HAP-1 (cell line): ENCODE measurements at regions of chr11 and their contacts with region 1.

Region 1: DNA sequence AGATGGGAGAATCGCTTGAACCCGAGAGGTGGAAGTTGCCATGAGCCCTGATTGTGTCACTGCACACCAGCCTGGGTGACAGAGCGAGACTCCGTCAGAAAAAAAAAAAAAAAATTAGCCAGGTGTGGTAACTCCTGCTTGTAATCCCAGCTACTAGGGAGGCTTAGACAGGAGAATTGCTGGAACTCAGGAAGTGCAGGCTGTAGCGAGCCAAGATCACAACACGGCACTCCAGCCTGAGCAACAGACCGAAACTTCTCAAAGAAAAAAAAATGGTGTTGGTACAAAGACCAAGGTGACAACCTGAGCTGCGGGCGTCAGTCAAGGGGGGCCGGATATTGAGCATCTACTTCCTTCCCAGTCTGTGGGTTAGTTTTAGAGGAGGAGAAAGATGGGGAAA is 48.4 kb upstream of the HSPA8 start:
- DNase-seq: no peak
- H3K4me3 ChIP-seq: no peak overlapping the region
- H3K4me1 ChIP-seq: no peaks in the 10 kb centered on the region
- H3K27me3 ChIP-seq: 0 out of 2 replicates have a peak, but pooled peaks cover 8% of the 10 kb centered on the region

Region 2: DNA sequence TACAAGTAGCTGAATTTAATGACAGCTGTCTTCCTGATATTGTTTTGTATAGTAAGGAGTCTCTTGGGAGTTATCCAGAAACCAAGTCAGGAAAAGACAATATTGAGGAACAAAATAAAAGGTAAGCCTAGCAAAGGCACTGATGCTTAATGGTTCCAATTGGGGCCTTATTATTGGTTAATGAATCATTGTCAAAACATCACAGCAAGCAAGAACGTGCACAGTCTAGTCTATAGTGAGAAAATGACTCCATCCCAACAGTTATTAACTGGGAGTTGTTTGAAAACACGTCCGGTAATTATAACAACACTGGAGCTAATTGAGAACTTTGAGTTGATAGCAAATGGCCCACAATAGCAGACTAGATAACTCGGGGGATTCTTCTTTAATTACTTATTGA is 146.4 kb before region 1 on chr11:
- in situ Hi-C with region 1: no loop called
- DNase-seq: no peak
- H3K4me3 ChIP-seq: no peak overlapping the region
- H3K4me1 ChIP-seq: no peaks in the 10 kb centered on the region
- H3K27me3 ChIP-seq: peaks cover 28% of the 10 kb centered on the region

Region 3: DNA sequence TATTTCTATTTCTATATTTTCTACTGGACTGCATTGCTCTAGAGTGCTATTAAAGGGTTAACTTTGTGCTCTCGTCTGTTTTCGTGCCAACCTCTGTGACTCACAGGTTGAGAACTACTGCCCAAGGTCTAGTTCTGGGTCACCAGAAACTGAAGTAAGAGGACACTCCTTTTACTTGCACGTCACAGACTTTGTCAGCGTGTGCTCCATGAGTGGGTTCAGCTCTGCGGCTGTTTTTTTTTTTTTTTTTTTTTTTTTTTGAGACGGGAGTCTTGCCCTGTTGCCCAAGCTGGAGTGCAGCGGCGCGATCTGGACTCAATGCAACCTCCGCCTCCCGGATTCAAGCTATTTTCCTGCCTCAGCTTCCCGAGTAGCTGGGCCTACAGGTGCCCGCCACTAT is 34.9 kb after region 1 on chr11:
- in situ Hi-C with region 1: no loop called
- DNase-seq: no peak
- H3K4me3 ChIP-seq: no peak overlapping the region
- H3K4me1 ChIP-seq: no peaks in the 10 kb centered on the region
- H3K27me3 ChIP-seq: 0 out of 2 replicates have a peak, but pooled peaks cover 3% of the 10 kb centered on the region

Region 4: GRCh38 chr11:123246749-123247495 is 136.6 kb after region 1 on chr11:
- in situ Hi-C with region 1: loop called (anchors 5 kb)
- DNase-seq: peak; percentile 65 to 87
- H3K4me3 ChIP-seq: no peak overlapping the region
- H3K4me1 ChIP-seq: no peaks in the 10 kb centered on the region
- H3K27me3 ChIP-seq: peaks cover 16% of the 10 kb centered on the region

Region 5: DNA sequence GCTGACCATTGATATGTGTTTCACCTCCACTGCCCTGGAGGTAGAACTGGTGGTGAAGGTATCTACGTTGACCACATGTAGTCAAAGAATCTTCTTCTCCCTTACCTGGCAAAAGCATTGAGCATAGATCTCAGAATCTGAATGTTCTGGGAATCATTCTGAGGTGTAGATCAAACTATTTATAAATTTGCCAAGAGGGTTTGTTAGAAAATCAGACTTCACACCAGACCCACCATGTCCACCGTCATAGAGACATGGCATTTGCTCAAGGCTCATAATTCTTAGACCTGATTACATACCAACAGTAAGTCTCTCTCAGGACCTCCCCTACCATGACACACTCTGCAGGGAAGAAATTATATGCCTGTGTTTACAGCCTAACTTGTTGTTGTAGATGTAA is 1274.0 kb after region 1 on chr11 and contains the start of gene OR8B2:
- in situ Hi-C with region 1: no loop called
- DNase-seq: no peak
- H3K4me3 ChIP-seq: no peak within 1 kb of the TSS
- H3K4me1 ChIP-seq: no peaks in the 10 kb centered on the region
- H3K27me3 ChIP-seq: no peaks in the 10 kb centered on the region